Sigmoid colon (tissue), 7 donors: ENCODE measurements at regions of chr10 and their contacts with region 1.

Region 1: GRCh38 chr10:30736685-30737232 is 107.2 kb upstream of the LYZL2 start:
- DNase-seq: peak; percentile 95
- H3K4me3 ChIP-seq: no peak overlapping the region
- H3K27ac ChIP-seq: peak overlapping the region in 3 of 4 donors; percentile 64 to 86 (median 78)
- H3K4me1 ChIP-seq: peaks cover 0 to 43% (median 34%) of the 10 kb centered on the region in 4 donors
- H3K27me3 ChIP-seq: no peaks in the 10 kb centered on the region
- CTCF ChIP-seq: no peak
- EP300 ChIP-seq: peak; percentile 17 to 96 (median 86)
- POLR2A ChIP-seq: no peak

Region 2: GRCh38 chr10:30774261-30774660 is 37.5 kb after region 1 on chr10:
- intact Hi-C with region 1: loop called (anchors 5 kb)
- DNase-seq: no peak
- H3K4me3 ChIP-seq: no peak overlapping the region
- H3K27ac ChIP-seq: no peak overlapping the region
- H3K4me1 ChIP-seq: peaks cover 0 to 21% (median 17%) of the 10 kb centered on the region in 4 donors
- H3K27me3 ChIP-seq: no peaks in the 10 kb centered on the region
- CTCF ChIP-seq: no peak
- EP300 ChIP-seq: no peak
- POLR2A ChIP-seq: no peak